Right ventricle myocardium inferior (tissue), 1 donor: ENCODE measurements at regions of chr15 and their contacts with region 1.

Region 1: GRCh38 chr15:34795267-34796081 is at the start of gene ACTC1:
- DNase-seq: peak; percentile 80
- ATAC-seq: peak; percentile 72
- total RNA-seq, gene ACTC1: 15,626 TPM

Region 2: DNA sequence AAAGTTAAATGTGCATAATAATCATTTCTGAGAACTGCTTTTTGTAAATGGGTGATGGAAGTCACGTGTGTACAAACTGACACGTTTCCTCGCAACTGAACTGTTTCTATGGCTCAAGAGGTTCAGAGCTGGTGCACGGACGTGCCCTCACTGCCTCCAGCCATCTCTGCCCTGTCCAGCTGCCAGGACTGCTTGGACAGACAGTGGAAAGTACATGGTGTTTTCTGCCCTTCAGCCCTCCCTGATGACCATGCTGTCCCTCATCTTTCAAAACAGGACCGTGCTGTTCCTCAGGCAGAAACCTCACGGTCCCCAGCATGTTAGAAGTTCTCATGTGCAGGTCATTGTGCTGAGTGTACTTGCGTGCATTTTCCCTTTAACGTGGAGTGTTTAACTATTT is 79.4 kb before region 1 on chr15:
- intact Hi-C with region 1: loop called (anchors 2 kb)
- DNase-seq: peak; percentile 72
- ATAC-seq: peak; percentile 89

Region 3: GRCh38 chr15:34721802-34722795 is 73.4 kb before region 1 on chr15:
- intact Hi-C with region 1: loop called (anchors 2 kb)
- DNase-seq: peak; percentile 81
- ATAC-seq: peak; percentile 93

Region 4: DNA sequence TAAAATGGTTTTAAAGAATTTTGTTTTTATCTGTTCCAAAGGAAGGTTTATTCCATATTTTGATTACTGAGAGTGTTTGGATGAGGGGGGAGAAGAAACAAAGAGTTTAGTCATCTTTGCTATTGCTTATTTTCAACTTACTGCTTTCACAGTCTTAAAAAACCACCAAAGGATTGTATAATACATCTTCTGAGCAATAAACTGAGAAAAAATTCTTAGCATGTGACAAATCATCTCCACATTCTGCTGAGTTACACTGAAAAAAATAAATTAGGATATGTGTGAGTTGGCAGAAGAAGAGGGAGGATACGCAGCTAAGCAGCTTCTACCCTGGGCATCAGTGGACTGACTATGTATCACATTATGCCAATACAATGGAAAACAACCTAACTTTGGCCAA is 23.1 kb after region 1 on chr15:
- intact Hi-C with region 1: no loop called
- DNase-seq: no peak
- ATAC-seq: no peak